G401 (cell line): ENCODE measurements at regions of chr19 and their contacts with region 1.

Region 1: GRCh38 chr19:14901675-14902260 is 15.8 kb upstream of the OR7A17 start:
- DNase-seq: no peak

Region 2: DNA sequence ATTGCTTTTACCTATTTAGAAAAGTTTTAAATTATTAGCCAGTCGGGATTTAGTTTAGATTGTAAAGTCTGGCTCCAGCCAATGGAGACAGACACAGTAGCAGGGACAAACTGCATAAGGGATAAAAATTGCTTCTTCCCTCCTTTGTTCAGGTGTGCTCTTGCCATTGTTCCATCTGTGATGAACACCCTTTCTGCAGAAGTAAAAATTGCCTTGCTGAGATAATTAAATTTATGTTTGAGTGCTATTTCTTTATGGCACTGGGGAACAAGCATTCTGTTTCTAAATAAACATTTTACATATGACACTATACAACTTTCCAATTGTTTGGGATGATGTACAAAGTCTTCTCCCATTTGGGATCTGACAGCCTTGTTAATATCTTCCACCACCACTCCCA is 57.5 kb after region 1 on chr19:
- in situ Hi-C with region 1: loop called (anchors 5 kb)
- DNase-seq: no peak